A673 (cell line): ENCODE measurements at regions of chr12 and their contacts with region 1.

Region 1: GRCh38 chr12:95623585-95624042 is 72.3 kb upstream of the USP44 start:
- DNase-seq: peak; percentile 86
- H3K4me3 ChIP-seq: no peak overlapping the region
- H3K27ac ChIP-seq: no peak overlapping the region
- H3K4me1 ChIP-seq: no peaks in the 10 kb centered on the region
- H3K27me3 ChIP-seq: no peaks in the 10 kb centered on the region
- CTCF ChIP-seq: peak; percentile 94

Region 2: DNA sequence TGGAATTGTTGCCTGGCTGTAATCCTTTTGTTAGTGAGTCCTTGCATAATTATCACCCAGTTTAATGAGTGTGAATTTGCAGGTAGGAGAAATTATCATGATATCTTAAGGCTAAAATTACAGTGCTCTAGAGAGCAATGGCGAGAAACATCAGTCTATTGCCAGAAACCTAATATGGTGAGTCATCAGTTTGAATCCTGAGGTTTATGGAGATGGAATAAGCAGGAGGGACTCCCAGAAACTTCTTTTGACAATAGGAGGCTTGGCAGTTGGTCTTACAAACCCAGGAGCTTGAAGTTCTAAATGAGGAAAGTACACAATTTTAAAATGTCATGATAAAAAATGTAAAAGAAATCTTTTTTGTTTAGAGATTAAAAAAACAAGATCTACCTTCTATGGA is 1977.9 kb before region 1 on chr12:
- CTCF ChIA-PET with region 1: interaction called, 12 read pairs
- POLR2A ChIA-PET with region 1: no interaction called
- intact Hi-C with region 1: no loop called
- DNase-seq: peak; percentile 15
- H3K4me3 ChIP-seq: no peak overlapping the region
- H3K27ac ChIP-seq: no peak overlapping the region
- H3K4me1 ChIP-seq: no peaks in the 10 kb centered on the region
- H3K27me3 ChIP-seq: no peaks in the 10 kb centered on the region
- CTCF ChIP-seq: no peak

Region 3: GRCh38 chr12:94309373-94309772 is 1314.2 kb before region 1 on chr12:
- CTCF ChIA-PET with region 1: no interaction called
- POLR2A ChIA-PET with region 1: no interaction called
- intact Hi-C with region 1: no loop called
- DNase-seq: no peak
- H3K4me3 ChIP-seq: no peak overlapping the region
- H3K27ac ChIP-seq: no peak overlapping the region
- H3K4me1 ChIP-seq: no peaks in the 10 kb centered on the region
- H3K27me3 ChIP-seq: no peaks in the 10 kb centered on the region
- CTCF ChIP-seq: no peak

Region 4: DNA sequence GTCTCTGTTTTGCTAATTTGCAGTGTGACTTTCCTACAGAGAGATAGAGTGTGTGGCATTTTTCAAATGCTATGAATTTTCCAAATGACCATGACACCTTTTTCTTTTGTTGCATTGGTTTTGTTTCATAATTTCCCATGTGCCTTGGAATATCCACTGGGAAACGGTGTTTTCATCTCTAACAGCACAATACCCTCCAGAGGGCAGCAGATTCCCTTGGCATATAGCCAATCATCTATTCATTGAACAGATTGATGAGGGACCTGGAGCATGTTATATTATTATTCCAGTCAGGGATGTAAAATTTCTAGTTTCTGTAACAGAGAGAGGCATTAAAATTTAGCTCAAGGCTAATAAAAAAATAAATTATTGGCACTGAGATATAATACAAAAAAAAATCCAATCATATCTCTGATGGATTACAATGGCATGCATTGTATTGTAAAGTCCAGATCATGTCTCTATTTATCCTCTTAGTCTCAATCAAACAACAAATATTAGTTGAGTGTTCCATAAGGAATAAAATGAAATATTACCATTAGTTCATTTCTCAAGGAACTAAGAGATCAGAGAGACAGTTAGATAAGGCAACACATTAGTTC is 196.6 kb after region 1 on chr12:
- CTCF ChIA-PET with region 1: no interaction called
- POLR2A ChIA-PET with region 1: no interaction called
- intact Hi-C with region 1: loop called (anchors 1 kb)
- DNase-seq: peak; percentile 80
- H3K4me3 ChIP-seq: no peak overlapping the region
- H3K27ac ChIP-seq: no peak overlapping the region
- H3K4me1 ChIP-seq: peaks cover 25% of the 10 kb centered on the region
- H3K27me3 ChIP-seq: no peaks in the 10 kb centered on the region
- CTCF ChIP-seq: peak; percentile 70